ENCODE measurements at regions of chr19 and their contacts with region 1.

Region 1: DNA sequence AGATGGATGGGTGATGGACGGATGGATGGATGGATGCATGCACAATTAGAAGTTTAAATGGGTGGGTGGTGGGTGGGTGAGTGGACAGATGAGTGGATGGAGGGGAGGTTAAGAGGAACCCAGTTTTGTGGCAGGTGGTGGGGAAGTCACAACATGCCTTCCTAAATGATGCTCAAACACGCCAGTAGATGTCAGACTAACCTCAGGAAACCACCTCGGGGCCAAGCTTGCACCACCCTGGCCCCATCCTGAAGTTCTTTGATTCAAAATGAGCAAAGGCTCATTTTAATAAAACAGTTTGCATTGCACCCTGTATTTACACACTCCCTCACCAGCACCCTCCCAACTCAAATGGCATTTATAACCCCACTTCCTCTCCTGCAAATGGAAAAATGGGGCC is 91.4 kb upstream of the CACNA1A start:
- DNase-seq: no peak
- H3K4me3 ChIP-seq: no peak overlapping the region
- H3K27ac ChIP-seq: no peak overlapping the region
- H3K4me1 ChIP-seq: no peaks in the 10 kb centered on the region
- H3K27me3 ChIP-seq: no peaks in the 10 kb centered on the region
- CTCF ChIP-seq: peak in 2 of 3 experiments; percentile 42 to 65
- POLR2A ChIP-seq: no peak

Region 2: DNA sequence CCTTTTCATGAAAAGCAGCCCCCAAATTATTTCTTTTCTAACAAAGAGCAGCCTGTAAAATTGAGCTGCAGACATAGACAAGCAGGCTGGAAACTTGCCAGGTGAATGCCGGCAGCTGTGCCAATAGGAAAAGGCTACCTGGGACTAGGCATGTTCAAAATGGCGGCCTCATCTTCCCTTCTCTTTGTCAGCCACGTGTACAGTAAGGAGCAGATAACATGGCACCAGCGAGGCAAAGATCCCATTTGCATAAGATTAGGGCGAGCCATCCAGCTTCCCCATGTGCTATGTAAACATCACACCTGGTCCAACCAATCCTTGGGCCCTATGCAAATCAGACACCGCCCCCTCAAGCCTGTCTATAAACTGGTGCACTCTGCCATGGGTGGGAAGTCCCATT is 60.2 kb before region 1 on chr19:
- intact Hi-C with region 1: no loop called
- DNase-seq: no peak
- H3K4me3 ChIP-seq: no peak overlapping the region
- H3K27ac ChIP-seq: no peak overlapping the region
- H3K4me1 ChIP-seq: no peaks in the 10 kb centered on the region
- H3K27me3 ChIP-seq: no peaks in the 10 kb centered on the region
- CTCF ChIP-seq: no peak
- POLR2A ChIP-seq: no peak

Region 3: GRCh38 chr19:13665125-13665905 is 67.7 kb after region 1 on chr19:
- intact Hi-C with region 1: no loop called
- DNase-seq: no peak
- H3K4me3 ChIP-seq: no peak overlapping the region
- H3K27ac ChIP-seq: no peak overlapping the region
- H3K4me1 ChIP-seq: no peaks in the 10 kb centered on the region
- H3K27me3 ChIP-seq: no peaks in the 10 kb centered on the region
- CTCF ChIP-seq: no peak
- POLR2A ChIP-seq: no peak

Region 4: DNA sequence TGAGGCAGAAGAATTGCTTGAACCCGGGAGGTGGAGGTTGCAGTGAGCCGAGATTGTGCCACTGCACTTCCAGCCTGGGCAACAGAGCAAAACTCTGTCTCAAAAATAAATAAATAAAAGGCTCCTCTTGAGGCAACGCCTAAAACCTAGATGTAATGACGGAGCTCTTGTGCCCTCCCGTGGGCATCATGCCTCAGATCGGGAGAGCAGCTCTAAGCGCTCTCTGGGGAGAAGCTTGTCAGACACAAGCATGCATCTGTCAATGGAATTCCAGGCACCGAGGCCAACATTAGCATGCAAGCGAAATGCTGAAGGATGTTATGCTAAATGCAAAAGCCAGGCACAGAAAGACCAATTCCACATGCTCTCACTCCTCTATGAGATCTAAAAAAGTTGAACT is 121.1 kb after region 1 on chr19:
- intact Hi-C with region 1: loop called (anchors 10 kb)
- DNase-seq: no peak
- H3K4me3 ChIP-seq: no peak overlapping the region
- H3K27ac ChIP-seq: no peak overlapping the region
- H3K4me1 ChIP-seq: no peaks in the 10 kb centered on the region
- H3K27me3 ChIP-seq: no peaks in the 10 kb centered on the region
- CTCF ChIP-seq: no peak
- POLR2A ChIP-seq: no peak

Region 5: GRCh38 chr19:13872695-13873389 is 275.2 kb after region 1 on chr19:
- intact Hi-C with region 1: loop called (anchors 10 kb)
- DNase-seq: no peak
- H3K4me3 ChIP-seq: peak overlapping the region; percentile 45 to 50
- H3K27ac ChIP-seq: peak overlapping the region; percentile 23
- H3K4me1 ChIP-seq: peaks cover 13% of the 10 kb centered on the region
- H3K27me3 ChIP-seq: no peaks in the 10 kb centered on the region
- CTCF ChIP-seq: no peak
- POLR2A ChIP-seq: no peak

Measured in vagina (tissue), 2 donors.